Heart left ventricle (tissue), 16 donors: ENCODE measurements at regions of chr4 and their contacts with region 1.

Region 1: DNA sequence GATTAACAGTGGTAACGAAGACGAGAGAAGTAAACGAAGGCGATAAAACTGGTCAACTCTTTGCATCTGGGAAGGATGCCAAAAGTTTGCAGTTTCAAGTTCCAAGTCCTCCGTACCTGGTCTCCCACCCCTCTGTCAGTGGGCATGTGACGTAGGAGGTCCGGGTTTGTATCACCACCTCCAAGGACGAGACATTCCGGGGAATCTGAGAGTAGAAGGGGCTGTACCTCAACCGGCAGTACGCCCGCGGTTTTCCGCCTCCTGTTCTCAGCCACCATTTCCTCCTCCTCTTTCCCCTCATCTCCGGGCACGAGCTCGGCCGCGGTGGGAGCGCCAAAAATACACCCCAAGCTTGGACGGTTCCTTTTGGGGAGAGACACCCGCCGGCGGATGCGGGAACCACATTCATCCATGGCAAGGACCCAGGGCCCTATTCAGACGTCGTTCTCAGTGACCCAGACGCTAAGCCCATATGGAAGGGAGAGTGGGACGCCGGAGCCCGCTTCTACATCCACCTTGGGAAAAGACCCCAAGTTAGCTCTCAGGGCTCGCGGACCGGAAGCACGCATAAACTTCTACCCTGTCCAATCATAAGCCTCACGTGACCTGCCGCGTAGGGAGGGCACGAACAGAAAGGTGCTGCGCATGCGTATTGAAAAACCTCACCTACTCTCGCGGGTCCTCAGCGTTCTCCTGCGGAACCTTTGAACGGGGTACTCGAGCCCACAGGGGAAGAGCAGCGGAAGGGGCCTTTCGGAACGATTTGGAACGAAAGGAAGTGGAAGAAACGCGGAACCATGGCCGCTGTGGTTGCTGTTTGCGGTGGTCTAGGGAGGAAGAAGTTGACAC is at the starts of genes HELQ and MRPS18C:
- DNase-seq: peak; percentile 96 to 98 (median 98)
- ATAC-seq: peak; percentile 99
- H3K4me3 ChIP-seq: peak within 1 kb of the TSS; percentile 48 to 92 (median 81)
- H3K27ac ChIP-seq: peak within 1 kb of the TSS; percentile 79 to 99 (median 96)
- H3K4me1 ChIP-seq: peaks cover 0 to 29% (median 21%) of the 10 kb centered on the region in 12 donors
- H3K27me3 ChIP-seq: no peaks in the 10 kb centered on the region
- CTCF ChIP-seq: peak in 5 of 12 donors; percentile 18 to 31 (median 22)
- POLR2A ChIP-seq: peak in 1 of 2 donors; percentile 77
- total RNA-seq, gene HELQ: 12.2 to 15.8 (median 13.1) TPM
- total RNA-seq, gene MRPS18C: 27.8 to 67.5 (median 51.7) TPM

Region 2: DNA sequence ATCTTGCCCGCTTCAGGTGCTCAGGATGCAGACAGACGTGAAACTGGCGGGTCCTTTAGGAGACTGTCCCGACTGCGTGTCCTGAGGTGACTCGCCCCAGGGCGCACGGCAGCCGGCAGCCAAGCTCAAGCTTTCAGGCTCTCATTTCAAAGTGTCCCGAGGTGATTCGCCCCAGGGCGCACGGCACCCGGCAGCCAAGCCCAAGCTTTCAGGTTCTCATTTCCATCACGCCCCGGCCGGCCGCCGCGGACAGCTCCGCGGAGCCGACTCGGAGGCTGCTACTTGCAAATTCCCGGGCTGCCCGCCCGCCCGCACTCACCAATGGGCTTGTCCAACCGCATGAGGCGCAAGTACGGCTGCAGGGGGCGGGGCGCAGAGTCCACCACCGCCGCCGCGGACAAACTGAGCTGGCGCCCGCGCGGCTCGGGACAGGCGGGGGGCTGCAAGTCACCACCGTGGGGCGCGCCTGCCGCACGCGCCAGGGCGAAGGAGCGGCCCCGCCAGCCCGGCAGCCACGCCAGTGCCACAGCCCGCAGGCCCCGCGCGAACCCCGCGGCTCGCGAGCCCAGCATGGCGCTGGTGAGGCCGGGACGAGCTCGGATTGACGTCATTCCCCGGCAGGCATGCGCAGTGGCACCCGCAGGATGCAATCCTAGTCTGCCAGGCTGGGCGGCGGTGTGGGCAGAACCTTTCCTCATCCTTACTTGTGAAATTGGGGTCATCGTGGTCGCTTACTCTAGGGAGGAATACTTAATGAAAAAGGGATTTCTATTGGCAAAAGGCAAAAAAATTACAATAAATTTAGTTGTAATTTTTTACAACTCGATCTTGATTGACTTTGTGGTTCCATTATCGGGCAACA is 171.1 kb before region 1 on chr4 and contains the start of gene COQ2:
- intact Hi-C with region 1: loop called in 1 of 10 experiments (anchors 10 kb)
- DNase-seq: peak; percentile 96 to 98 (median 97)
- ATAC-seq: peak; percentile 98 to 99 (median 98)
- H3K4me3 ChIP-seq: peak within 1 kb of the TSS; percentile 45 to 91 (median 72)
- H3K27ac ChIP-seq: peak within 1 kb of the TSS; percentile 91 to 100 (median 96)
- H3K4me1 ChIP-seq: peaks cover 0 to 43% (median 8%) of the 10 kb centered on the region in 12 donors
- H3K27me3 ChIP-seq: no peaks in the 10 kb centered on the region
- CTCF ChIP-seq: peak in 11 of 12 donors; percentile 21 to 63 (median 47)
- POLR2A ChIP-seq: peak in 1 of 2 donors; percentile 81
- total RNA-seq, gene COQ2: 18.0 to 26.3 (median 22.9) TPM

Region 3: GRCh38 chr4:83484500-83485461 is 29.3 kb after region 1 on chr4 and contains the start of gene ABRAXAS1:
- intact Hi-C with region 1: loop called in 3 of 10 experiments (anchors 1 to 2 kb)
- DNase-seq: peak; percentile 94 to 96 (median 95)
- ATAC-seq: peak; percentile 95 to 100 (median 98)
- H3K4me3 ChIP-seq: peak within 1 kb of the TSS; percentile 47 to 94 (median 86)
- H3K27ac ChIP-seq: peak within 1 kb of the TSS; percentile 76 to 96 (median 88)
- H3K4me1 ChIP-seq: peaks cover 0 to 19% (median 7%) of the 10 kb centered on the region in 12 donors
- H3K27me3 ChIP-seq: no peaks in the 10 kb centered on the region
- CTCF ChIP-seq: peak in 1 of 12 donors; percentile 13
- POLR2A ChIP-seq: peak; percentile 76 to 97
- total RNA-seq, gene ABRAXAS1: 3.4 to 10.2 (median 7.8) TPM

Region 4: GRCh38 chr4:83535520-83536361 is 80.2 kb after region 1 on chr4 and contains the start of gene GPAT3:
- intact Hi-C with region 1: no loop called
- DNase-seq: peak; percentile 78 to 91 (median 89)
- ATAC-seq: peak; percentile 83 to 94 (median 88)
- H3K4me3 ChIP-seq: peak within 1 kb of the TSS; percentile 57 to 90 (median 73)
- H3K27ac ChIP-seq: peak within 1 kb of the TSS; percentile 70 to 95 (median 92)
- H3K4me1 ChIP-seq: peaks cover 0 to 24% (median 8%) of the 10 kb centered on the region in 12 donors
- H3K27me3 ChIP-seq: peaks cover 0 to 19% (median 0%) of the 10 kb centered on the region in 9 donors
- CTCF ChIP-seq: no peak
- POLR2A ChIP-seq: peak in 1 of 2 donors; percentile 69
- total RNA-seq, gene GPAT3: 26.8 to 64.5 (median 38.8) TPM